ENCODE measurements at regions of chr19 and their contacts with region 1.

Region 1: DNA sequence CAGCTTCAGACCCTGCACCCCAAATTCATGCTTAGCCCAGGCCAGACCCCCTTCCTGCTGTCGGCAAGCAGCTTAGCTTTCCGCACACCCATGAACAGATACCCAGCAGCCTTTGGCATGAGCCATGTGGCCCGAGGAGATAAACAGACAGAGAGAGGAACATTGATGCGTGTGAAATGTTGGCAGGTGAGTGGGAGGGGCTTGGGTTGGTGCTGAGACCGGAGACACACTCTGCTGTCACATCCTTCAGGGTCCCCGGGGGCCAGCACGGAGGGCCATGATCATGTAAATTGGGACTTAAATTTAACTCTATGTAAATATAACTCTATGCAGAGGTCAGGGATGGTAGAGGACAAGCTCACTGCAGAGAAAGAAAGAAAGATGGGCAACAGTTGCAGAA is 1.5 kb downstream of the CD22 start:
- DNase-seq: peak; percentile 76
- ATAC-seq: peak; percentile 81
- H3K4me3 Mint-ChIP-seq: peak overlapping the region; percentile 90
- H3K27ac Mint-ChIP-seq: peak overlapping the region; percentile 94
- H3K4me1 Mint-ChIP-seq: peaks cover 85% of the 10 kb centered on the region
- H3K27me3 Mint-ChIP-seq: no peaks in the 10 kb centered on the region
- CTCF ChIP-seq: no peak

Region 2: GRCh38 chr19:35279985-35280821 is 50.3 kb before region 1 on chr19:
- CTCF ChIA-PET with region 1: no interaction called
- POLR2A ChIA-PET with region 1: interaction called, 16 read pairs
- intact Hi-C with region 1: loop called (anchors 2 kb)
- DNase-seq: no peak
- ATAC-seq: peak; percentile 33
- H3K4me3 Mint-ChIP-seq: no peak overlapping the region
- H3K27ac Mint-ChIP-seq: peak overlapping the region; percentile 75
- H3K4me1 Mint-ChIP-seq: peaks cover 45% of the 10 kb centered on the region
- H3K27me3 Mint-ChIP-seq: no peaks in the 10 kb centered on the region
- CTCF ChIP-seq: no peak

Region 3: DNA sequence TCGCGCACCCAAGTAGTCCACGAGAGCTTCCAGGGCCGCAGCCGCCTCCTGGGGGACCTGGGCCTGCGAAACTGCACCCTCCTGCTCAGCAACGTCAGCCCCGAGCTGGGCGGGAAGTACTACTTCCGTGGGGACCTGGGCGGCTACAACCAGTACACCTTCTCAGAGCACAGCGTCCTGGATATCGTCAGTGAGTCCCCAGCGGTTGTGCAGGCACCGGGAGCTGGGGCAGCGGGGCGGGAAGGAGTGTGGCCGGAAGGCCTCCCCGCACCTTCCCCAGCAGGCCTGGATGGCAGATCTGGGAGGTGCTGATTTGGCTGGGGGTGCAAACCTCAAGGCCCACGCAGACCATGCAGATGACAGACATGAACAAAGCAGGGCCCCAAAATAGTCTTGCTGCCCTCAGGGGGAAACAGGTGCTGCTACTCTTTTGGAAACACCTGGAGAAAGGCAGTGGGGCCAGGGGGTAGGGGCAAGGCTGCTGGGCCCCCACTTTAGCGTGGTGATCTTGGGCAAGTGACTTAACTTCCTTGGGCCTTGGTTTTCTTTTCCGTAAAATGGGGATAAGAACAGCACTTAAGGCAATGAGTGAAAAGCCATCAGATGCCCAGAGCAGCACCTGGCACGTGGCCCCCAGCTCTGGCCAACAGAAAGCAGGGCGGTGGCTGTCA is 34.5 kb before region 1 on chr19:
- CTCF ChIA-PET with region 1: interaction called, 3 read pairs
- POLR2A ChIA-PET with region 1: interaction called, 22 read pairs
- intact Hi-C with region 1: loop called (anchors 5 kb)
- DNase-seq: peak; percentile 50
- ATAC-seq: peak; percentile 80
- H3K4me3 Mint-ChIP-seq: peak overlapping the region; percentile 12
- H3K27ac Mint-ChIP-seq: peak overlapping the region; percentile 48
- H3K4me1 Mint-ChIP-seq: peaks cover 24% of the 10 kb centered on the region
- H3K27me3 Mint-ChIP-seq: no peaks in the 10 kb centered on the region
- CTCF ChIP-seq: no peak

Region 4: DNA sequence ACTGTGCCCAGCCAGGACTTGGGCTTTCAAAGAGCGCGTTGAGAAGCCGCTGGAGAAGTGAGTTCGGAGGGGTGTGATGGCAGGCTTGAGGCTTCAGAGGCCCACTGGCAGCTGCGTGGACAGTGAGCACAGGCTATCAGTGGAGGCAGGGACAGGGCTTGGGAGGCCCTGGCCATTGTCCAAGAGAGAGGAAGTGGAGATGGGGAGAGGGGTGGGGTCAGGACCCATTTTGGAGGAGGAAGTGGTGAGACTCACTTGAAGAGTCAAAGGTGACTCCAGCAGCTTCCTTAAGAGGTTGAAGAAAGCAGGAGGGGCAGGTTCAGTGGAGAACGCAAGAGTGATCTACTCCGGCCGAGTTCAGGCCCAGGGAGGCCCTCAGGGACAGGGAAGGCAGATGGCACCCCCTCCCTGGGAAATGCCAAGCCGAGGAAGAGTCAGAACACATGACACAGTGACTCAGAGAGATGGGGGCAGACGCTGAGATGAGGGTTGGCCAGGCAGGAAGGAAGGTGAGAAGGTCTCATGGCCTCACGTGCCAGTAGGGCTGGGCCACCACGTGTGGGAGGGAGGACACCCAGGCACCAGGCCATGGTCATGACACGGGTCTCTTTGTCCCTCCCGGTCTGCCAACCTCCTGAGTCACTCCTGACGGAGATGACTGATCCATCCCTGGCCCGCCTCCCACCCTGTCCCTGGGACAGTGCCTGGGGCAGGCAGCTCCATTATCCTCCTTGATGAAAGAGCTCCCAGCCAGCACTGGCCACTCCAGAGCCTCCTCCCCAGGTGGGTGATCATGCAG is 11.6 kb before region 1 on chr19:
- CTCF ChIA-PET with region 1: interaction called, 10 read pairs
- POLR2A ChIA-PET with region 1: interaction called, 304 read pairs
- intact Hi-C with region 1: loop called (anchors 1 kb)
- DNase-seq: no peak
- ATAC-seq: peak; percentile 26
- H3K4me3 Mint-ChIP-seq: peak overlapping the region; percentile 71
- H3K27ac Mint-ChIP-seq: peak overlapping the region; percentile 96
- H3K4me1 Mint-ChIP-seq: peaks cover 89% of the 10 kb centered on the region
- H3K27me3 Mint-ChIP-seq: no peaks in the 10 kb centered on the region
- CTCF ChIP-seq: no peak

Region 5: DNA sequence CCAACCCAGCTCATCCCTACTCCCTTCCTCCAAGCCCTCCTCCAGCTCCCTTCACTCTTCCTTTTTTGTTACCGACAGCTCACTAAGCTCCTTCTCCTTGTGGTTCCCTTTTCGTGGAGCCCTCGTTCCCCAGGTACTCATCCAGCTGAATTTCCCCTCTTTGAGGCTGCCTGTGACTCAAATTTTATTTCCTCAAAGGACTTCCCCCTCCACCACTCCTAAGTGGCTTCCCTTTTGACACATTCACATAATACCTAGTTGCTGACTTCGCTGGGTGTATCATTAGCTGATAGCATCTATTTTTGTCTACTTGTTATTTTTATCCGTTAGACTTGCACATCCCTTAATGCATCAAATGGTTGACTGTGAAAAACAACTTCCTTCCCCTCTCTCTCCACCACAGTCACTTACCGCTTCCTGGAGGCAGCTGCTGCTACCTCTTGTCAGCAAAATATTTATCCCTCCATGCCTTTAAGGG is 132.0 kb after region 1 on chr19:
- CTCF ChIA-PET with region 1: interaction called, 3 read pairs
- POLR2A ChIA-PET with region 1: interaction called, 46 read pairs
- intact Hi-C with region 1: no loop called
- DNase-seq: peak; percentile 35
- ATAC-seq: peak; percentile 76
- H3K4me3 Mint-ChIP-seq: peak overlapping the region; percentile 76
- H3K27ac Mint-ChIP-seq: peak overlapping the region; percentile 85
- H3K4me1 Mint-ChIP-seq: peaks cover 64% of the 10 kb centered on the region
- H3K27me3 Mint-ChIP-seq: no peaks in the 10 kb centered on the region
- CTCF ChIP-seq: no peak

Region 6: DNA sequence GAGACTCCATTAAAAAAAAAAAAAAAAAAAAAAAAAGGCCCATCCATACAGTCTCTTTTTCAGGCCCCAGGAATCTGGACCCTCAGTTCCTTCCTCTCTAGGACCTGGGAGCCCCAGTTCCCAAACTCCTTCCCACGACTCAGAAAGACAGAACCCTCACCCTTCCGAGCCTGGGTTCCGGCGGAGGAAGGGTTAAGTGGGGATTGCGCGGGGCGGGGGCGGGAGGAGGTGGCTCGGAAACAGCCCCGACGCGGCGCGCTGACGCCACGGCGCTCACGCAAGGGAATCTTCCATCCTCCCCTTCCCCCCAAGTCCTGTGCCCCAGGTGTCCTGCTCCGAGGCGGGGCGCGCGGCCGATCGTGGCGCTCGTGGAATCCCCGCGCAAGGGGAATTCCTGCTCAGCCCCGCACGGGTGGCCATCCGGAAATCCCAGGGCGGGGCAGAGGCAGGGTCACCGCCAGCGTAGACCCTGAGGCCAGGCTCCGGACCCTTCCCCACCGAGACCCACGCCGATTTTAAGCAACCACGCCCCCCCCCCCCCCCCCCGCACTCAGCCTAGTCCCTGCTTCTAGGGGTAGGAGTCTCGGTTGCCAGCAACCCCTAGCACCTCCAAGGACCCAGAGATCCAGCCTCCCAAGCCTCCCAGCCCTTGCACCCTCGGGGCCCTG is 569.2 kb after region 1 on chr19:
- CTCF ChIA-PET with region 1: no interaction called
- POLR2A ChIA-PET with region 1: interaction called, 3 read pairs
- intact Hi-C with region 1: loop called (anchors 10 kb)
- DNase-seq: peak; percentile 93
- ATAC-seq: peak; percentile 57
- H3K4me3 Mint-ChIP-seq: peak overlapping the region; percentile 95
- H3K27ac Mint-ChIP-seq: peak overlapping the region; percentile 95
- H3K4me1 Mint-ChIP-seq: peaks cover 77% of the 10 kb centered on the region
- H3K27me3 Mint-ChIP-seq: no peaks in the 10 kb centered on the region
- CTCF ChIP-seq: no peak